WTC11 (cell line): ENCODE measurements at regions of chr1 and their contacts with region 1.

Region 1: DNA sequence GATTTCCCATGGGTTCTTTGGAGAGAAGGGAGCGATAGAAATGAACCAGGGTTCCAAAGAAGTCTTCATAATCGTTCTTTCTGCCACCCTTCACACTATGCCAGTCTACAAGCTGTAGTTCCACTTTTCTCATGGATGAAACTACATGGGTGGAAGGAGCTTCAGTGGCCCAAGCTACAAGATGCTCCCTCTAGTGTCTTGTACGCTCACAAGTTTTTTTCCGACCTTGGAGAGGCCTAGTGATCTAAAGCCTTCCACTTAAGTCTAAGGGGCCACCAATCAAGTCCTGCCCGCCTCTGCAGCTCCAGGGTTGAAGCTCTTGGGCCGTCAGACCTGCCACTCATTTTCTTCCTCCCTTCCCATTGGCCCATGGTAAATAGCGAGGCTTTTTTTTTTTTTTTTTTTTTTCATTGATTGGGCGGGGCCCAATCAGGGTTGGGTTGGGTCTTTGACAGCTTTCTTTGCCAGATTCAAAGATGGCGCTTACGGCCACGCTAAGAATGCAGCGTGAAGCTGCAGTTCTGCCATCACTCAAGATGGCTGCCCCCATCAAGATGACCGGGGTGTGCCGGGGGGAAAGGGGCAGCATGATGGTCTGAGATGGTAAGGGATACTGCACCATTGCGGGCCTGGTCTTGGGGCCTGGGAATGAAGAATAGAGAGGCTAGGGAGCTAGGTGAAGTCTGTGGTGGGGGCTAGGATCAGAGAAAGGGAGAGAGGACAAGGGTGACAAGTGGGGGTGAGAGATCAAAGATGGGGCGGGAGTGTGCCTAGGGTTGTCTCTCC is at the start of gene TOMM40L:
- DNase-seq: peak; percentile 88
- ATAC-seq: peak; percentile 94
- H3K4me3 Mint-ChIP-seq: peak within 1 kb of the TSS; percentile 100
- H3K27ac Mint-ChIP-seq: peak within 1 kb of the TSS; percentile 98
- H3K4me1 Mint-ChIP-seq: peaks cover 28% of the 10 kb centered on the region
- H3K27me3 Mint-ChIP-seq: no peaks in the 10 kb centered on the region
- CTCF ChIP-seq: no peak
- total RNA-seq, gene TOMM40L: 13.0 to 16.9 TPM (median 15.1 TPM) in 3 replicates

Region 2: GRCh38 chr1:161201828-161202725 is 23.6 kb before region 1 on chr1 and contains the start of gene NDUFS2:
- CTCF ChIA-PET with region 1: interaction called, 47 read pairs
- POLR2A ChIA-PET with region 1: interaction called, 7 read pairs
- DNase-seq: peak; percentile 97
- ATAC-seq: peak; percentile 80
- H3K4me3 Mint-ChIP-seq: peak within 1 kb of the TSS; percentile 91
- H3K27ac Mint-ChIP-seq: peak within 1 kb of the TSS; percentile 96
- H3K4me1 Mint-ChIP-seq: peaks cover 59% of the 10 kb centered on the region
- H3K27me3 Mint-ChIP-seq: no peaks in the 10 kb centered on the region
- CTCF ChIP-seq: no peak
- total RNA-seq, gene NDUFS2: 105 to 108 TPM (median 105 TPM) in 3 replicates

Region 3: DNA sequence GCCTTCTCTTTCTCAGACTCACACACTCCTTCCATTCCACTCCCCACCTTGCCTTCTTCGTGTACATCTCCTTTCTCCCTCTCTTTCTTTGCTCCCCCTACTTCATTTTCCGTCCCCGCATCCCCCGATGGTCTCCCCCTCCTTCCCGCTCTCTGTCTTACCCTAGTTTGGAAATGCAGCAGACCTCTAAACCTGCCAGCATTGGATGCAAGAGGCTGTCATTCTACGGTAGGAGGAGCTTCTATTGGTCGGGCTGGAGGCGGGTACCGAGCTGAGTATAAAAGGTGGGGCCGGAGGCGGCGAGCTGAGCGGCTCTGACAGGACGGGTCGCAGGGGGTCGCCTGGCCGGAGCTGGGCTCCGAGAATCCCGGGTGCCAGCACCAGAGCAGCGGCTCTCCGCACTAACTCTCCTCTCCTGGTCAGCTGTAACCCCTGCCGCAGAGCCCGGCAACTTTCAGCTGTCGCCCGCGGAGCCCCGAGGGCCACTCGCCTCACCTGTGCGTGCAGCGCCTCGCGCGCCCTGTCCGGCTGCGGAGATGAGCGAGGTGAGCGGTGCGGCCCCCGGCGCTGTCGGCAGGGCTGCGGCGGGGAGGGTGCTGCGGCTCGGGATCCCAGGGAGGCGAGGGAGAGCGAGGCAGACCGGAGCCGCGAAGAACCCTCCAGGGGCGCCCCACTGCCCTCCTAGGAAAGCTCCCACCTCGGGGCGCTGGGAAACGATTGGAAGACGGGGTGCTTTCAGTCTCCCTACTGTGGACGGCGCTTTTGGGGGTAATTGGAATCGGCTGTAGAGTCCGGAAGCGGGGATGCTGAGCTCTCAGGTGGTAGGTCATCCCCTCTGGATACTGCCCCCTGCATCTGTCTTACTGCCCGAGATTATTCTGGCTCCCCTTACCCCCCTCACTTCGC is 33.0 kb after region 1 on chr1 and contains the start of gene PCP4L1:
- CTCF ChIA-PET with region 1: interaction called, 21 read pairs
- POLR2A ChIA-PET with region 1: no interaction called
- DNase-seq: peak; percentile 87
- ATAC-seq: peak; percentile 97
- H3K4me3 Mint-ChIP-seq: peak within 1 kb of the TSS; percentile 65
- H3K27ac Mint-ChIP-seq: no peak within 1 kb of the TSS
- H3K4me1 Mint-ChIP-seq: peaks cover 22% of the 10 kb centered on the region
- H3K27me3 Mint-ChIP-seq: peaks cover 70% of the 10 kb centered on the region
- CTCF ChIP-seq: no peak
- total RNA-seq, gene PCP4L1: 0.92 to 1.2 TPM (median 1.1 TPM) in 3 replicates

Region 4: GRCh38 chr1:161305867-161306519 is 80.3 kb after region 1 on chr1:
- CTCF ChIA-PET with region 1: interaction called, 107 read pairs
- POLR2A ChIA-PET with region 1: interaction called, 18 read pairs
- DNase-seq: peak; percentile 98
- ATAC-seq: peak; percentile 97
- H3K4me3 Mint-ChIP-seq: peak overlapping the region; percentile 99
- H3K27ac Mint-ChIP-seq: peak overlapping the region; percentile 89
- H3K4me1 Mint-ChIP-seq: peaks cover 45% of the 10 kb centered on the region
- H3K27me3 Mint-ChIP-seq: no peaks in the 10 kb centered on the region
- CTCF ChIP-seq: no peak

Region 5: GRCh38 chr1:161382214-161383019 is 156.7 kb after region 1 on chr1:
- CTCF ChIA-PET with region 1: interaction called, 24 read pairs
- POLR2A ChIA-PET with region 1: interaction called, 4 read pairs
- DNase-seq: no peak
- ATAC-seq: peak; percentile 62
- H3K4me3 Mint-ChIP-seq: no peak overlapping the region
- H3K27ac Mint-ChIP-seq: no peak overlapping the region
- H3K4me1 Mint-ChIP-seq: peaks cover 16% of the 10 kb centered on the region
- H3K27me3 Mint-ChIP-seq: no peaks in the 10 kb centered on the region
- CTCF ChIP-seq: peak; percentile 36; the same call in 1 of the 2 replicates